ENCODE measurements at regions of chr2 and their contacts with region 1.

Region 1: DNA sequence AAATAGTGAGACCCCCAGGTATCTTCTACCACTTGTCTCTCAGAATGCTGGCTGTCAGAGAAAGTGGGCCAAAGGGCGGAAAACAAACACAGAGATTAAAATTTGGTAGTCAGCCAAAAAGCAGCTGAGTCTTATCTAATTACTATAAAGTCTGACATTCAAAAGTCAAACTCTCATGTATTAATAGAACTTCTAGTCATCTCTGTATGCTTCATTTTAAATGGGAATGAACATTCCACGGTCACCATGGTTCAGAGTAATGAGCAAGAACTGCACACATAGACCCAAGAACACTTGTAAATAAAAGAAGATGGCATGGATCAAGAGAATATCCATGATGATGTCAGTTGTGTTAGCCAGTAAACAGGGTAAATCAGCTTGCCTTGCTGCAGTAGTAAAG is 1267.0 kb upstream of the CHAC2 start:
- DNase-seq: no peak
- ATAC-seq: no peak
- H3K4me3 ChIP-seq: no peak overlapping the region
- H3K27ac ChIP-seq: no peak overlapping the region
- H3K4me1 ChIP-seq: no peaks in the 10 kb centered on the region
- H3K27me3 ChIP-seq: no peaks in the 10 kb centered on the region
- CTCF ChIP-seq: no peak
- EP300 ChIP-seq: no peak
- POLR2A ChIP-seq: no peak
- RAD21 ChIP-seq: no peak

Region 2: GRCh38 chr2:52571380-52572347 is 71.1 kb after region 1 on chr2:
- CTCF ChIA-PET with region 1: no interaction called
- POLR2A ChIA-PET with region 1: no interaction called
- RAD21 ChIA-PET with region 1: no interaction called
- SMC1A ChIA-PET with region 1: no interaction called
- in situ Hi-C with region 1: no loop called
- intact Hi-C with region 1: loop called (anchors 5 kb)
- DNase-seq: no peak
- ATAC-seq: no peak
- H3K4me3 ChIP-seq: no peak overlapping the region
- H3K27ac ChIP-seq: no peak overlapping the region
- H3K4me1 ChIP-seq: no peaks in the 10 kb centered on the region
- H3K27me3 ChIP-seq: no peaks in the 10 kb centered on the region
- CTCF ChIP-seq: no peak
- EP300 ChIP-seq: no peak
- POLR2A ChIP-seq: no peak
- RAD21 ChIP-seq: no peak

Region 3: DNA sequence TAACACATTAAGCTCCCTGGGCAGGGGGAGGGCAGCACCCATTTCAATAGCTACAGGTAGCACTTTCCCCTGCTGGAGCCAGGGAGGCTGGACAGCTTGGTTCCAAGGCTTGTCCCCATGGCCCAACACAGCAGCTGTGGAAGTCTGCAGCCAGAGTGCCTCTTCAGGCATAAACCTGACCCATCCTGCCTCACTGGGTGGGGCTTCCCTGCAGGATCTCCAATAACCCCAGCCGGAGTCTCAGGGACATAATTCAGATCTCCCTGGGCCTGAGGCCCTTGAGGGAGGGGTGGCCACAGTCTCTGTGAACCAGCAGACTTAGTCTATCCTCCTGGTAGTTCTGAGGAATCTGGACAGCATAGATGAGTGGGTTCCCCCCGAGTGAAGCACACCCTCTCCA is 265.2 kb after region 1 on chr2:
- CTCF ChIA-PET with region 1: no interaction called
- POLR2A ChIA-PET with region 1: no interaction called
- RAD21 ChIA-PET with region 1: no interaction called
- SMC1A ChIA-PET with region 1: no interaction called
- in situ Hi-C with region 1: no loop called
- intact Hi-C with region 1: loop called (anchors 10 kb)
- DNase-seq: no peak
- ATAC-seq: no peak
- H3K4me3 ChIP-seq: no peak overlapping the region
- H3K27ac ChIP-seq: no peak overlapping the region
- H3K4me1 ChIP-seq: no peaks in the 10 kb centered on the region
- H3K27me3 ChIP-seq: no peaks in the 10 kb centered on the region
- CTCF ChIP-seq: no peak
- EP300 ChIP-seq: no peak
- POLR2A ChIP-seq: no peak
- RAD21 ChIP-seq: no peak

Measured in GM12878 (cell line).